ENCODE measurements at regions of chr19 and their contacts with region 1.

Region 1: DNA sequence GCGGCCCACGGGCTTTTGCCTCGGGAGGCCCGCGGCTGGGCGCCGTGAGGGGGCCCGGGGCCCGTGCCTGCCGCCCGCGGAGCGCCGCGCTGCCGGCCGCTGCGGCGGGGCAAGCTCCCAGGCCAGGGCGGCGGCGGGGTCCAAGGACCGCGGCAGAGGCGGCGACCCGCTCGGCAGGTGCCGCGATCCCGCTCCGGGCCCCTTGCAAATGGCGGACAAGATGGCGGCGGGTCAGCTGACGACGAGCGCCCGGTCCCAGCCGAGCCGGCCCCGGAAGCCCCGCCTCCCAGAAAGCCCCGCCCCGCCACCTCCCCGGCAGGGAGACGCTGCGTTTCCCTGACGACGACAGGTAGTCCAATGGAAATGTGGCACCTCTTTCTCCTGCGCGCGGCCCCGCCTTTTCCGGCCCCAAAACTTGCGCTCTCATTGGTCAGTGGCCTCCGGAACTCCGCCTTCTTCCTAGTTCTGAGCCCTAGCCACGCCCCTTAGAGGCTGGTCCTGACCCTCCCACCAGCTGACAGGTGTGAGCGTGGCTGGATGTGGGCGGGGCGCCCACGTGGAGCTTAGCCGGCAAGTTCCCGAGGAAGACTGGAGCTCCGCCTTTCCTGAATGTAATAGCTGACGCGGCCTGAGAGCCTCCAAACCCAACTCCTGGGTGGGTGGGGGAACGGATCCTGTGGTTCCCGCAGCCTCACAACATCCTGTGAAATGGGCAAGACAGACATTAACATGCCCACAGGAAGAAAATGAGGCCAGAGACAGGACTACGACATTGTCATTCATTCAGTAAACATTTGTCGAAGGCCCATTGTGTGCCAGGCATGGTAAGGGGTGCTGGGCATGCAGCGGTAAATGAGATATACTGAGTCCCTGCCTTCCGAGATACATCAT is at the start of gene AP3D1:
- DNase-seq: peak; percentile 100
- H3K4me3 Mint-ChIP-seq: peak within 1 kb of the TSS; percentile 84
- H3K27ac Mint-ChIP-seq: peak within 1 kb of the TSS; percentile 92
- H3K4me1 Mint-ChIP-seq: peaks cover 30% of the 10 kb centered on the region
- H3K27me3 Mint-ChIP-seq: no peaks in the 10 kb centered on the region
- total RNA-seq, gene AP3D1: 104 and 113 TPM in 2 replicates

Region 2: GRCh38 chr19:2016041-2016807 is 135.4 kb before region 1 on chr19:
- intact Hi-C with region 1: loop called (anchors 5 kb)
- DNase-seq: peak; percentile 88
- H3K4me3 Mint-ChIP-seq: peak overlapping the region; percentile 82
- H3K27ac Mint-ChIP-seq: peak overlapping the region; percentile 35
- H3K4me1 Mint-ChIP-seq: peaks cover 8% of the 10 kb centered on the region
- H3K27me3 Mint-ChIP-seq: no peaks in the 10 kb centered on the region

Region 3: DNA sequence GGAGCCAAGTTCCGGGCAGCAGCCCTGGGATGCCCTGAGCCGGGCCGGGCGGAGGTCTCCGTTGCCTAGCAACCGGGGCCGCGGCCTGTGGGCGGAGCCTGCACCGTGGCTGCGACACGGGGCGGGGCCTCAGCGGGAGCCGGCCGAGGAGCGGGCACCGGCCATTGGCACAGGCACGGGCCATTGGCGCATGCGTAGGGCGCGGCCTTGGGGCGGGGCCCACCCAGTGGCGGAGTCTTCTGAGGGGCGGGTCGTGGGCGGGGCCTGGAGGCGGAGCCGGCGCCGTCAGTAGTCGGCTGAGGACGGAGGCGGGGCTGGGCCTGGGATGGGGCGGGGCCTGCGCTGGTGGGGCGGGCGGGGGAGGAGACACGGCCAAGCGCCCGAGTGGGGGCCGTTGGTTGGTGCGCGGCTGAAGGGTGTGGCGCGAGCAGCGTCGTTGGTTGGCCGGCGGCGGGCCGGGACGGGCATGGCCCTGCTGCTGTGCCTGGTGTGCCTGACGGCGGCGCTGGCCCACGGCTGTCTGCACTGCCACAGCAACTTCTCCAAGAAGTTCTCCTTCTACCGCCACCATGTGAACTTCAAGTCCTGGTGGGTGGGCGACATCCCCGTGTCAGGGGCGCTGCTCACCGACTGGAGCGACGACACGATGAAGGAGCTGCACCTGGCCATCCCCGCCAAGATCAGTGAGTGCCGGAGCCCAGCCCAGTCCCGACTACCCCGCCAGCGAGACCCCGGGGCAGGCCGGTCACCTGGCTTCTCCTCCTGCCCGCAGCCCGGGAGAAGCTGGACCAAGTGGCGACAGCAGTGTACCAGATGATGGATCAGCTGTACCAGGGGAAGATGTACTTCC is 54.9 kb before region 1 on chr19 and contains the start of gene IZUMO4:
- intact Hi-C with region 1: loop called (anchors 5 kb)
- DNase-seq: peak; percentile 100
- H3K4me3 Mint-ChIP-seq: peak within 1 kb of the TSS; percentile 90
- H3K27ac Mint-ChIP-seq: peak within 1 kb of the TSS; percentile 94
- H3K4me1 Mint-ChIP-seq: peaks cover 25% of the 10 kb centered on the region
- H3K27me3 Mint-ChIP-seq: no peaks in the 10 kb centered on the region
- total RNA-seq, gene IZUMO4: 9.5 and 10.0 TPM in 2 replicates

Region 4: DNA sequence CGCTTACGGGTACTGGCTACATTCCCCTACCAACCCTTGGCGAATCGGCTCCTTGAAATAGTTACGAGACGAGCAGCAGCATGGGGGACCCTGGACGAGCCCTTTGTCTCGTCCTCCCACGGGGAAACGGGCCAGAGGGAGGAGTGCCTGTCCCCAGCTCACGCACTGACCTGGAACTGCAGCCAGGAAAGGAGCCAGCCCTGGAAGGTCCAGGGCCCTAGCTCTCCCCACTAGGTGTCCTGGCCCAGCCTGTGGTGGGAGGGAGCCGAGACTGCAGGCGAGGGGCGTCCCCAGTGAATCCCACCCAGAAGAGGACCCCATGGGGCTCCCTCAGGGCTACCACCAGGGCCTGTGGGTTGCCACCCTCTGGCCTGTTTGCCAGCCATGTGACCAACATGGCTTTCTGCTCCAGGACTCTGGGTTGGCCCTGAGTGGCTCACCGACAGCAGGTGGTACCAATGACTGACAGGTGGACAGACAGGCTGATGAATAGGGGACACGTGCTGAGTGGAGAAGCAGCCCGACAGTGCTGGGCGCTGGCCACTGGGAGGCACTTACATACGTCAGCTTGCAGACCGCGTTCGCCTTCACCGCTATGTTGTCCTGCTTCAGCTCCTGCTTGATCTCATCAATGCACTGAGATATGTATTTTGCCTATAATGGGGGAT is 13.4 kb before region 1 on chr19:
- intact Hi-C with region 1: no loop called
- DNase-seq: no peak
- H3K4me3 Mint-ChIP-seq: no peak overlapping the region
- H3K27ac Mint-ChIP-seq: no peak overlapping the region
- H3K4me1 Mint-ChIP-seq: no peaks in the 10 kb centered on the region
- H3K27me3 Mint-ChIP-seq: no peaks in the 10 kb centered on the region

Region 5: DNA sequence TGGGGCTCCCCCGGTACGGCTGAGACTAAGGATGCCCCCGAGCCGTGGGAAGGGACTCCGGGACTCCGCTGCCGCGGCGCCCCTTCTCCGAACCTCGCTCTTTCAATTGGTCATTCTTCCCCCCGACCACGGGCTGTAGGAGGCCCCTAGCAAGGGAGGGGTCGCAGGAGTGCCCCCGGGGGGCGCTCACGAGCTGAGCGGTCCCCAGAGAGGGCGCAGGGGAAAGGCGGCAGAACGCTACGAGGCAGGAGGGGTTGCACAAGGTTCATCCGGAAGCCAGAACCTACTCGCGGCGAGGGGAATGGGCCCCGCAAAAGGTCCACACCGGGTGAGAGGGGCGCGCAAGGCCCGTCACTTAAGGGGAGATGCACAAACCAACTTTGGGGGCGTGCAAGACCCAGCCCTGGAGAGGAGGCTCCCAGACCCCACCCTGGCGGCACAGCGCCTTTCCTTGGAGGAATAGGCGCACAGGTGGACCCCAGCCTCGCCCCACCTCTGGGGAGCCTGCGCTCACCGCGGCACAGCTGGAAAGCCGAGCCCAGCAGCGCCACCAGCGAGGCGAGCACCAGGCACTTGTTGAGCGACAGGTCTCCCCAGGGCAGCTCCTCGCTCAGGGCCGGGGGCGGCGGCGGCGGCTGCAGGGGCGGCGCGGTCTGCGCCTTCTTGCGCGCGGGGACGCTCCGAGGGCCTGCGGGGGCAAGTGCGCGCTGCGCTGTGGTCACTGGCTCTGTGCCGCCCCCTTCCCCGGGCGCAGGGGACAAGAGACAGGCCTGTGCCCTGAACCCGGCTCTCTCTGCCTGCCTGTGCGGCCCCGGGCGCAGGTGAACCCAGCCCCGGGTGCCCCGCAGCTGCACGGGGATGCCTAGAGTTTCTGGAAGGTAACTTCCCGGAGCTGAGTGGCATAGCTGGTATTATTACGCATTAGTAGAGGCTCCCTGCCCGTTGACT is 101.8 kb after region 1 on chr19:
- intact Hi-C with region 1: no loop called
- DNase-seq: peak; percentile 81
- H3K4me3 Mint-ChIP-seq: peak overlapping the region; percentile 52
- H3K27ac Mint-ChIP-seq: no peak overlapping the region
- H3K4me1 Mint-ChIP-seq: peaks cover 14% of the 10 kb centered on the region
- H3K27me3 Mint-ChIP-seq: peaks cover 15% of the 10 kb centered on the region

Region 6: DNA sequence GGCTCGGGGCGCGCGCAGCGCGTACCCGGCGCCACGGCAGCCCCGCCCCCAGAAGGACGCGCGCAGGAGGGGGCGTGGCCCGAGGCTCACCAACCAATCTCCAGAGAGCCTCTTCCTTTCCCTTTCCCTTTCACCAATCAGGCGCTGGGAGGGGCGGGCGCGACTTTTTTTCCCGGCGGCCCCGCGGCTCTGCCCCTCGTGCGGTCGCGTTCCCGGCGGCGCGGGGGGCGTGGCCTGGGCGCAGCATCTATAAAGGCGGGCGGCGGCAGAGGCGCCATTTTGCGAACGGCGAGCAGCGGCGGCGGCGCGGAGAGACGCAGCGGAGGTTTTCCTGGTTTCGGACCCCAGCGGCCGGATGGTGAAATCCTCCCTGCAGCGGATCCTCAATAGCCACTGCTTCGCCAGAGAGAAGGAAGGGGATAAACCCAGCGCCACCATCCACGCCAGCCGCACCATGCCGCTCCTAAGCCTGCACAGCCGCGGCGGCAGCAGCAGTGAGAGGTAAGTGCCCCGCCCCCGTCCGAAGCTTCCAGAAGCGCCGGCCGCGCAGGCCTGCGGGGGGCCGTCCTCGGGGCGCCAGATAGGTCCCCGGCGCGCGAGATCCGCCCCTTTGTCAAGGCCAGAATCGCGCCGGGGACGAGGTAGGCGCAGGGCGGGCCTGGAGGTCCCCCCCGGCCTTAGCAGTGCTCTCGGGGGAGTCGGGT is 117.8 kb after region 1 on chr19:
- intact Hi-C with region 1: loop called (anchors 2 kb)
- DNase-seq: peak; percentile 100
- H3K4me3 Mint-ChIP-seq: peak overlapping the region; percentile 93
- H3K27ac Mint-ChIP-seq: peak overlapping the region; percentile 91
- H3K4me1 Mint-ChIP-seq: peaks cover 31% of the 10 kb centered on the region
- H3K27me3 Mint-ChIP-seq: no peaks in the 10 kb centered on the region

Region 7: DNA sequence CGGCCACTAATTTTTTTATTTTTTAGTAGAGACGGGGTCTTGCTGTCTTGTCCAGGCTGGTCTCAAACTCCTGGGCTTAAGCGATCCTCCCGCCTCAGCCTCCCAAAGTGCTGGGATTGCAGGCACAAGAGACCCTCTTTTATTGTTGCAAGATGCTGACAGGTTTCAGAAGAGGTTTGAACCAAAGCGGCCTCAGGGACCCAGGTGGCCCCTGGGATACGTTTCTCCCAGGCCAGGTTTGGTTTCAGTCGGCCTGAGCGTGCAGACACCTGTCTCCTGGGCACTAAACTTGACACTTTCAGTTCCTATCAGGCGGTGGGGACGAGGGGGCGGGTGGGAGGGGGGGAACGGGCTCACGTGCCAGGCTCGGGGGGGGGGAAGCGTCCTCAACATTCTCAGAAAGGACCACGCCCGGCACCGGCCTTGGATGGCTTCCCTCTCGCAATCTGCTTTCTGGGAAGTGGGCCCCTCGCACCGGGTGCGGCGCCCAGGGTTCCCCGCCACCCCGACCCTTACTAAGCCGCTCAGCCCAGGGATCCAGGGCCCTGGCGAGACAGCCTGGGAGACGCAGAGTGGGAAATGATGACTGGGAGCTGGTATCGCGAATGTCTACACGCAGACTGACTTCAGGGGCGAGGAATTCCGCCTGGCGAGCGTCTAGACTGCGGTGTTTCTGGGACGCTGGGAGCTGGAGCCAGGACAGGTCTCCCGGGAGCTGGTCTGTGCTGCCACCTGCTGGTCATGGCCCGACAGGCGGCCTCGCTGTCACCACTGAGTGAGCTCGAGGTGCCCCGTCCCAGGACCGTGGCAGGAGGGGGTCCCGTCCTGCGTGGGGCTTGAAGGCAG is 459.3 kb after region 1 on chr19:
- intact Hi-C with region 1: loop called (anchors 10 kb)
- DNase-seq: peak; percentile 96
- H3K4me3 Mint-ChIP-seq: peak overlapping the region; percentile 87
- H3K27ac Mint-ChIP-seq: peak overlapping the region; percentile 38
- H3K4me1 Mint-ChIP-seq: peaks cover 37% of the 10 kb centered on the region
- H3K27me3 Mint-ChIP-seq: peaks cover 13% of the 10 kb centered on the region